ENCODE measurements at regions of chr2 and their contacts with region 1.

Region 1: GRCh38 chr2:157492189-157492773 is 48.4 kb upstream of the CYTIP start:
- DNase-seq: peak; percentile 65
- CTCF ChIP-seq: peak; percentile 67

Region 2: GRCh38 chr2:157443795-157444640 is 48.3 kb before region 1 on chr2 and contains the start of gene CYTIP:
- CTCF ChIA-PET with region 1: interaction called, 14 read pairs
- POLR2A ChIA-PET with region 1: interaction called, 4 read pairs
- DNase-seq: peak; percentile 38
- CTCF ChIP-seq: no peak

Region 3: DNA sequence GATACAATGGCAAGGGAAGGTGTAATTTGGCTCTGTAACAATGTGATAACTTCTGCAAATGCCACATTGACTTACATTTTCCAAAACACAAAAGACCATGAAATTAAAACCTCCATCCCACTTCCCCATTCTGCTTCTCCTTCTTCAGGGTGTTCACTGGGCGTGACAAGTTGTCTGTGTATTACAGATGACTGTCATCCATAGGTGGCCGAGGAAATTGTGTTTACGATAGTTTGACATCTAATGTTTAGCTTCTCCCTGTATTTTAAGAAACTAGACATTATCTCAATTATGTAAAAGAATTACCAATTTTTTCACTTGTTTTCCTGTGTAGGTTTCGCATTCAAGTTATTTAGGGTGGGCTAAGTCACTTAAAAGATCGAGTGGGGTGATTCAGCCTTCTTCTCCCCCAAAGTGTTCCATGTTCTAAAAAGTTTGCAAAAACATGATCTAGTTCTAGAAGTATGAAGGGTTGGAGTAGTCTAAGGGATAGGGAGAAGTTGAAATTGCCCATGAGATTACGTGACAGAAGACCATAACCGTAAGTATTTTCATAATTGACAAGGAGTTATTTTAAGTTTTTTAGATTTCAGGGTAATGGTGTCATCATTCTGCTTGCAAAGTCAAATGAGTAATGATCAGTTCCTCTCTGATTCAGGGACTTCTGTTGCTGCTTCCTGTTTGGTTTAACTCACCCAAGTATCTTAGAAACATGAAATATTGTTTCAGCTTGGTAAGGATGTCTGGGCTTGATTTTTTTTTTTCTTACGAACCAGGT is 23.2 kb before region 1 on chr2:
- CTCF ChIA-PET with region 1: interaction called, 16 read pairs
- POLR2A ChIA-PET with region 1: no interaction called
- DNase-seq: peak; percentile 66
- CTCF ChIP-seq: no peak

Region 4: DNA sequence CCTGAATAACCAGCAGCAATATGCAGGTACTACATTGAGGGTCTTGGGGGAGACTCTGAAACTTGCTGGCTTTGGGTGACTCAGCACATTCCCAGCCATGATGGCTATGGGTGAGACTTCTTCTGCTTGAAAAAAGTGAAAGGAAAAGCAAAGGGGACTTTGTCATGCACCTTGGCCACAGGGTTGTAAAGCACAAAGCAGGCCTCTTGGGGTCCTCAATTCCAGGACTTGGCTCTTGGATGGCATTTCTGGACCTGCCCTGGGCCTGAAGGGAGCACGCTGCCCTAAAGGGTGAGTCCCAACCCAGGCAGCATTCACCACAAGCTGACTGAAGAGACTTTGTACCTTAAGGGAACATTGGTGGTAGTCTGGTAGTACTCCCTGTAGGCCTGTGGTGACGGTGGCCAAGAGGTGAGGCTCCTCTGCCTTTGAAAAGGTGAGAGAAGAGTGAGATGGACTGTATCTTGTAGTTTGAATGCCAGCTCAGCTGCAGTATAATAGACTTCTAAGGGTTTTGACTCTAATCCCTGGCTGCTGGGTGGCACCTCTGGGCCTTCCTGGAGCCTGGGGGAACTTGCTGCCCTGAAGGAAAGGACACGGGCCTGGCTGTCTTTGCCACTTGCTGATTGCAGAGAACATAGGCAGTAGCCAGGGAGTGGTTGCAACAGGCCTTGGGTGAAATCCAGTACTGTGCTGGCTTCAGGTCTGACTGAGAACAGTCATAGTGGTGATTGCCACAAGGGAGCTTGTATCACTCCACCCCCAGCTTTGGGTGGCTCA is 11.9 kb before region 1 on chr2:
- CTCF ChIA-PET with region 1: interaction called, 31 read pairs
- POLR2A ChIA-PET with region 1: no interaction called
- DNase-seq: no peak
- CTCF ChIP-seq: no peak

Region 5: GRCh38 chr2:157751462-157752058 is 259.3 kb after region 1 on chr2:
- CTCF ChIA-PET with region 1: interaction called, 10 read pairs
- POLR2A ChIA-PET with region 1: no interaction called
- DNase-seq: no peak
- CTCF ChIP-seq: peak; percentile 27

Region 6: GRCh38 chr2:158006961-158007719 is 514.9 kb after region 1 on chr2:
- CTCF ChIA-PET with region 1: interaction called, 15 read pairs
- POLR2A ChIA-PET with region 1: no interaction called
- DNase-seq: no peak
- CTCF ChIP-seq: no peak